ENCODE measurements at regions of chr5 and their contacts with region 1.

Region 1: GRCh38 chr5:171445644-171446516 is 26.4 kb downstream of the FGF18 start:
- DNase-seq: no peak

Region 2: GRCh38 chr5:172059661-172060100 is 613.8 kb after region 1 on chr5:
- in situ Hi-C with region 1: loop called (anchors 25 kb)
- DNase-seq: peak; percentile 32

Measured in KBM-7 (cell line).